ENCODE measurements at regions of chr9 and their contacts with region 1.

Region 1: DNA sequence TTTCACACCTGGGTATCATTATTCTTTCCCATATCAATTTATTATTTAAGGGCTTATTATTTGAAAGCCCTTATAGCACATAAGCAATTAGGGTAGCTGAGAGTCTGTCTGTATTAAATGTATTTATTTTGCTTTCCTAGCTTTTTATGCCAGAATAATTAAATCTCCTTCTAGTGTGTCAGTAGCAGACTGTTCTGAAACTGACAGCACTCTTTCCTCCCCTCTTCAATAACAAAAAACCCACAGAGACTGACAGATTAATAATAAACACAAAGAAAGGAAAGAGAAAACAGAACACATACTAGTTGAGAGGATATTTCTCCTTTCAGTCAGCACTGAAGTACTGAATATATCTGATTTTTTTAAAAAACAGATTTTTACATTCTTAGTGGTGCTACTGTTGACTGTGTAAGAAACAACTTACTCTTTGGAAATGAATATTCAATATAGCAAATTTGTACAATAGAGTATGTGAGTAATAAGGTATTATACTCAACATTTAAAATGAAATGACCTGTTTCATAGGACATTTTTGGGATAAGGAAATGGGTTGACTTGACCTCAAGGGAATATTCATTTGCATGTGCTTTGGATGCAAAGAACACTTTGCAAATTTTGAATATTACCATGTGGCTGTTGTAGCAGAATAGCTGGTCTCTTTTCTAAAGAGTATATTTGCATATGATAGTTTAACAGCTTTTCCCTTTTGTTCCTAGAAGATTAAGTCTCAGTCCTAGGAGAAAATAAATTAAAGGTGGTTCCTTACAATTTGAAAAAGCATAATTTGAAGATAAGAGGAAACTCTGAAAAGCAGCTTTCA is 208.3 kb downstream of the SPATA31D1 start:
- DNase-seq: no peak
- H3K4me3 ChIP-seq: no peak overlapping the region
- H3K27ac ChIP-seq: no peak overlapping the region
- H3K4me1 ChIP-seq: peaks cover 3% of the 10 kb centered on the region
- CTCF ChIP-seq: no peak

Region 2: DNA sequence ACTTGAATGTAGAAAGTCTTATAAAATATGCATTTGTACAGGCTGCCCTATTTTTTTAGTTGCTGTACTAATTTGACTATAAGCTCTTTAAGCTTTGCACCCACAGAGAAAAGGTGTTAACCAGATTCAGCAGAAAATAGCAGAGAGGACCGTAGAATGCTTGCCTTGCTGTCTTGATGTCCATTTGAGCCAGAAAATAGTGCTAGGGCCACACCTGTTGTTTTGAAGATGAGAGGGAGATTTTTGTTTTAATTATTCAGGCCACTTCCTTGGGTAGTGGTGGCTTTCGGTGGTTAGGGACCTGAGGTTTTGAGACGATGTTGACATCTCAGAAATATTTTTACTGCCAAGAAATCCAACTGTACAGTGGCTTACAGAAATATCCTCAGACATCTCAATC is 12.3 kb before region 1 on chr9:
- CTCF ChIA-PET with region 1: no interaction called
- POLR2A ChIA-PET with region 1: interaction called, 15 read pairs
- intact Hi-C with region 1: no loop called
- DNase-seq: peak; percentile 87
- H3K4me3 ChIP-seq: peak overlapping the region; percentile 51
- H3K27ac ChIP-seq: peak overlapping the region; percentile 86
- H3K4me1 ChIP-seq: peaks cover 56% of the 10 kb centered on the region
- CTCF ChIP-seq: no peak

Measured in OCI-LY7 (cell line).